Caco-2 (cell line): ENCODE measurements at regions of chr4 and their contacts with region 1.

Region 1: DNA sequence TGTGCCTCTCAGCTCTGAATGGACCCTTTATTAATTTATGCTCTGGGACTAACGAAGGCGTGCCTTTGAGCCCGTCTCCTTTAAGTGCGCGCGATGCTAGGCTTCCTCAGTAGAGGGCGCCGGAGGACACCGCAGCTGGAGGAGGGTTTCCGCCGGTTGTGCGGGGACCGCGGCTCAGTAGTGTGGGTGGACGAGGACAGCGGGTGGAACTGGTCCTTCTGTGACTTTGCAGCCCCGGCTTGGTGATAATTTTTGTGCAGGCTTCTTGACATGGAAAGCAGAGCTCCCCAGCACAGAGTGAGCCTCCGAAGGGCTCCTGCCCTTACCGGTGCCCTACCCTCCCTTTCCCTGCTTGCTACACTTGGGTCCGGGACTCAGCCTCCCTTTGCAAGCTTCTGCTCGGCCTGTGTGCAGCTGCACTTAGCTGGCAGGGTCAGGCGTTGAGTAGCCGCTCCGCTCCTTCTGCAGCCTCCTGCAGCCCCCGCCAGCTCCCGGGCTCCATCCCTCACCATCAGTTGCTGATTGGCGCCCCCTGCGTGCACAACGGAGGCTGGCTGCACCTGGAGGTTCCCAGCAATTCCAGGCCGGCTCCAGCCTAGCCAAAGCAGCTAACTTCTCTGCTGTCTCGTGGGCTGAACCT is 26.8 kb upstream of the BOD1L1 start:
- DNase-seq: peak; percentile 67 to 78
- H3K4me3 ChIP-seq: peak overlapping the region; percentile 40
- H3K4me3 Mint-ChIP-seq: peak overlapping the region; percentile 72
- H3K27ac Mint-ChIP-seq: no peak overlapping the region
- H3K4me1 ChIP-seq: no peaks in the 10 kb centered on the region
- H3K4me1 Mint-ChIP-seq: no peaks in the 10 kb centered on the region
- H3K27me3 ChIP-seq: no peaks in the 10 kb centered on the region
- H3K27me3 Mint-ChIP-seq: peaks cover 12% of the 10 kb centered on the region
- CTCF ChIP-seq: peak; percentile 71 to 91

Region 2: GRCh38 chr4:12729384-12729783 is 924.9 kb before region 1 on chr4:
- CTCF ChIA-PET with region 1: no interaction called
- POLR2A ChIA-PET with region 1: no interaction called
- intact Hi-C with region 1: loop called (anchors 1 kb)
- DNase-seq: no peak
- H3K4me3 ChIP-seq: no peak overlapping the region
- H3K4me3 Mint-ChIP-seq: no peak overlapping the region
- H3K27ac Mint-ChIP-seq: no peak overlapping the region
- H3K4me1 ChIP-seq: 0 out of 2 replicates have a peak, but pooled peaks cover 2% of the 10 kb centered on the region
- H3K4me1 Mint-ChIP-seq: no peaks in the 10 kb centered on the region
- H3K27me3 ChIP-seq: no peaks in the 10 kb centered on the region
- H3K27me3 Mint-ChIP-seq: peaks cover 16% of the 10 kb centered on the region
- CTCF ChIP-seq: peak in 1 of 2 experiments; percentile 24

Region 3: GRCh38 chr4:12852338-12853307 is 801.7 kb before region 1 on chr4:
- CTCF ChIA-PET with region 1: no interaction called
- POLR2A ChIA-PET with region 1: no interaction called
- intact Hi-C with region 1: loop called (anchors 1 kb)
- DNase-seq: peak in 1 of 2 experiments; percentile 43
- H3K4me3 ChIP-seq: no peak overlapping the region
- H3K4me3 Mint-ChIP-seq: no peak overlapping the region
- H3K27ac Mint-ChIP-seq: no peak overlapping the region
- H3K4me1 ChIP-seq: no peaks in the 10 kb centered on the region
- H3K4me1 Mint-ChIP-seq: no peaks in the 10 kb centered on the region
- H3K27me3 ChIP-seq: no peaks in the 10 kb centered on the region
- H3K27me3 Mint-ChIP-seq: peaks cover 4% of the 10 kb centered on the region
- CTCF ChIP-seq: peak; percentile 29 to 58

Region 4: GRCh38 chr4:13452927-13453579 is 201.2 kb before region 1 on chr4:
- CTCF ChIA-PET with region 1: no interaction called
- POLR2A ChIA-PET with region 1: no interaction called
- intact Hi-C with region 1: no loop called
- DNase-seq: no peak
- H3K4me3 ChIP-seq: no peak overlapping the region
- H3K4me3 Mint-ChIP-seq: no peak overlapping the region
- H3K27ac Mint-ChIP-seq: no peak overlapping the region
- H3K4me1 ChIP-seq: no peaks in the 10 kb centered on the region
- H3K4me1 Mint-ChIP-seq: no peaks in the 10 kb centered on the region
- H3K27me3 ChIP-seq: no peaks in the 10 kb centered on the region
- H3K27me3 Mint-ChIP-seq: no peaks in the 10 kb centered on the region
- CTCF ChIP-seq: no peak

Region 5: DNA sequence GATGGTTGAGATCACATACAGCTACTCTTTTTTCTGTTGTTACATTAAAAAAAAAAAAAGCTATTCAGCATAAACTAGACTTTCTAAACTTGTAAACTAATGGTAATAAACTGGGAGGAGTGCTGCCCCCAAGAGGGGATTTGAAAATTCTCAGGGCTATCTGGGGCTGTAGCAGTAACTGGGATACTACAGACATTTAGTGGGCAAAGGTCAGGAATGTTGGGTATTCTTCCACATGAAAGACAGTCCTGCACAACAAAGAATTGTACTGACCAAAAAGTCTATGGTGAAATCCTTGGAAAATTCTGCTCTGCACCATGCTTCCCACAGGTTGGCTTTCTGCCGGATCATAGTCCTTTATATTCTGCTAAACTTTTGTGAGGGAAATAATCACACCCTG is 205.8 kb after region 1 on chr4:
- CTCF ChIA-PET with region 1: no interaction called
- POLR2A ChIA-PET with region 1: no interaction called
- intact Hi-C with region 1: loop called (anchors 2 kb)
- DNase-seq: peak in 1 of 2 experiments; percentile 36
- H3K4me3 ChIP-seq: no peak overlapping the region
- H3K4me3 Mint-ChIP-seq: no peak overlapping the region
- H3K27ac Mint-ChIP-seq: no peak overlapping the region
- H3K4me1 ChIP-seq: peaks cover 9% of the 10 kb centered on the region
- H3K4me1 Mint-ChIP-seq: no peaks in the 10 kb centered on the region
- H3K27me3 ChIP-seq: no peaks in the 10 kb centered on the region
- H3K27me3 Mint-ChIP-seq: no peaks in the 10 kb centered on the region
- CTCF ChIP-seq: no peak

Region 6: DNA sequence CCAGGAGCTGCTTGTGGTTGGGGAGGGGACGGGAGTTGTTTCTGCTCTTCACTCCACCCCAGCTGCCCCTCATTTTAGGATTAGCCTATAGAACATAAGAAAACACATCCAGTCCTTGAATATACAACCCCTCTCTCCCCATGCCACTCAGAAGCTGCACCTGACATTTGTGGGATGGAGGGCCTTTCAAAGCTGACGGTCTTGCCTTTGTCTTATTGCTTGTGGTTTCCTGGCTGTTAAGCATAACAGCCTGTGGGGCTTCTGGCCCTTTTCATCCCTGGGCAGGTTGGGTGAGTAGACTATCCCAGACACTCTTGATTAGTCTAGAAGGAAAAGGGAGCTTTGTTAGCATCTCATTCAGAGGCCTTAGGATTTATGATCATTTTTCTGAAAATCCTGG is 380.8 kb after region 1 on chr4:
- CTCF ChIA-PET with region 1: no interaction called
- POLR2A ChIA-PET with region 1: no interaction called
- intact Hi-C with region 1: loop called (anchors 10 kb)
- DNase-seq: no peak
- H3K4me3 ChIP-seq: no peak overlapping the region
- H3K4me3 Mint-ChIP-seq: no peak overlapping the region
- H3K27ac Mint-ChIP-seq: no peak overlapping the region
- H3K4me1 ChIP-seq: no peaks in the 10 kb centered on the region
- H3K4me1 Mint-ChIP-seq: no peaks in the 10 kb centered on the region
- H3K27me3 ChIP-seq: no peaks in the 10 kb centered on the region
- H3K27me3 Mint-ChIP-seq: peaks cover 8% of the 10 kb centered on the region
- CTCF ChIP-seq: no peak

Region 7: GRCh38 chr4:14254252-14254651 is 600.0 kb after region 1 on chr4:
- CTCF ChIA-PET with region 1: no interaction called
- POLR2A ChIA-PET with region 1: no interaction called
- intact Hi-C with region 1: loop called (anchors 1 kb)
- DNase-seq: peak; percentile 36 to 52
- H3K4me3 ChIP-seq: no peak overlapping the region
- H3K4me3 Mint-ChIP-seq: no peak overlapping the region
- H3K27ac Mint-ChIP-seq: no peak overlapping the region
- H3K4me1 ChIP-seq: no peaks in the 10 kb centered on the region
- H3K4me1 Mint-ChIP-seq: no peaks in the 10 kb centered on the region
- H3K27me3 ChIP-seq: no peaks in the 10 kb centered on the region
- H3K27me3 Mint-ChIP-seq: no peaks in the 10 kb centered on the region
- CTCF ChIP-seq: peak; percentile 29 to 64

Region 8: DNA sequence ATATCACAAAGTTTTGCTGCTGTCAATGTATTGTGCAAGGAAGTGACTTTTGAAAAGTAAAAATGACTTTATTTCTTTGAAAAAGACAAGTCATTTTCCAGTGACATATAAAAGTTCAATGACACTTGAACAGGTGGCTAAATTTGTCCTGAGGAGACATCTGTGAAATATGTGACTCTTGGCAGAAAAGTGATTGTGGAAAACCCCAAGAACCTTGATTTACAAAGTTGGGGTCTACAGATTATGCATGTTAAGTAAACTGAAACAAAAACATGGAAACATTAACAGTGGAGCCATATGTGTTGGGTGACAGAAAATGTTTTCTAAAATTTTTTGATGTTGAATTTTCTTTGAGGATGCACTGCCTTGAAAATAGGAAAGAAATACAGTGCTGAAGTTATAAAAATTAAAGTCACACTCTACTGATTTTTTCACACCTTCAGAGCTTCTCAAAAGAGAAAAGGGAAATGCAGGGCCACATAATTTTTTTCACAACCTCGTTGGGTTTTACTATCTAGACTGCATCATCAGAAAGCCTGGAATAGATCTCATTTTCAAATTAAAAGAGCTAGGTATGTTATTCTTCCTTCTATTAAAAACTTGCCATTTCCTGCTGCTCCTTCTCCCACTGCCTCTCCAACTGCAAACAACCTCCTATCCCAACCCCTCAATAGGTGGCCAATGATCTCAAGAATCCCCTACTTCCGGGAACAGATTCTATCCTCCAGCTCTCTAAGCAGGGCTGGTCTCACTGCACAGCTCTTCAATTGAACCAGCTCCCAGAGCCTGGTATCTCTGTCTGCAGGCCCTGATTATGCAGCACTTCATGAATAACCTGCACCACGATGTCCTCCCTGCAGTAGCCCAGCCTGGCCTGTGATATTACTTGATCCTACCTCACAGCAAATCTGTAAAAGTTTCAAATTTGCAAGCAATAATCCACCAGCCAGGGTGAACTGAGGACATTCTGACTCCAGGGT is 777.2 kb after region 1 on chr4:
- CTCF ChIA-PET with region 1: no interaction called
- POLR2A ChIA-PET with region 1: no interaction called
- intact Hi-C with region 1: loop called (anchors 10 kb)
- DNase-seq: no peak
- H3K4me3 ChIP-seq: no peak overlapping the region
- H3K4me3 Mint-ChIP-seq: no peak overlapping the region
- H3K27ac Mint-ChIP-seq: no peak overlapping the region
- H3K4me1 ChIP-seq: no peaks in the 10 kb centered on the region
- H3K4me1 Mint-ChIP-seq: no peaks in the 10 kb centered on the region
- H3K27me3 ChIP-seq: no peaks in the 10 kb centered on the region
- H3K27me3 Mint-ChIP-seq: no peaks in the 10 kb centered on the region
- CTCF ChIP-seq: no peak